Activated CD4-positive, alpha-beta T cell treated with anti-CD3 and anti-CD28 coated beads, Interleukin-2, amount 10 ng/mL, durations not matched to agents 24 days and 14 days (primary cell): ENCODE measurements at regions of chr2 and their contacts with region 1.

Region 1: DNA sequence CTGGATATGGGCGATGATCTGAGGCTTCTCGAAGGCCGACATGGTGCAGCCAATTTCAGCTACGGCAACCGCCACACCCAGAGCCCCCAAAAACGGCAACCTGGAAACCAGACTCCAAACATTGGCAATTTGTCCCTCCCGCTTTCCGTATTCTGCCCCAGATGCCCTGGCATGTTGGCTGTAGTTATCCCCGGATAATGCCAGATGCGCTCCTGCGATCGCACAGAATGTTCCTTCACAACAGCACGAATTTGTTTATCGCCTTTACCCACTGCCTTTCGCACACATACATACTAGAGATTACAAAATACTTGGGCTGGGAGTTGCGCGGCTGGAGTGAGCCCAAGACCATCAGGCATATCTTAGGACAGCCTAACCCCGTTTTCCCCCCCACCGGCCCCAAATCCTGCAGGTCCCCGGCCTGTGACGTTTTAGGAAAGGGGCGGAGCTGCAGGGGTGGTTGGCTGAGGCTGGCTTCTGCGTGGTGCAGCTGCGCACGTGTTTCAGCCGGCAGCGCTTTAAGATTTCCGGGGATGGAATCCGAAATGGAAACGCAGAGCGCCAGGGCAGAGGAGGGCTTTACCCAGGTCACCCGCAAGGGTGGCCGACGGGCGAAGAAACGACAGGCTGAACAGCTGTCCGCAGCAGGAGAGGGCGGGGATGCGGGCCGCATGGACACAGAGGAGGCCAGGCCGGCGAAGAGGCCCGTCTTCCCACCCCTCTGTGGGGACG is at the start of gene PNO1:
- DNase-seq: peak; percentile 99
- H3K4me3 Mint-ChIP-seq: peak within 1 kb of the TSS; percentile 98
- H3K27ac Mint-ChIP-seq: peak within 1 kb of the TSS; percentile 99
- H3K4me1 Mint-ChIP-seq: peaks cover 26% of the 10 kb centered on the region
- H3K27me3 Mint-ChIP-seq: no peaks in the 10 kb centered on the region
- total RNA-seq, gene PNO1: 35.4 and 38.4 TPM in 2 replicates

Region 2: GRCh38 chr2:68062680-68063387 is 94.7 kb before region 1 on chr2 and contains the start of gene C1D:
- intact Hi-C with region 1: loop called (anchors 1 kb)
- DNase-seq: peak; percentile 98
- H3K4me3 Mint-ChIP-seq: peak within 1 kb of the TSS; percentile 93
- H3K27ac Mint-ChIP-seq: peak within 1 kb of the TSS; percentile 95
- H3K4me1 Mint-ChIP-seq: peaks cover 14% of the 10 kb centered on the region
- H3K27me3 Mint-ChIP-seq: peaks cover 22% of the 10 kb centered on the region
- total RNA-seq, gene C1D: 28.9 and 33.7 TPM in 2 replicates

Region 3: DNA sequence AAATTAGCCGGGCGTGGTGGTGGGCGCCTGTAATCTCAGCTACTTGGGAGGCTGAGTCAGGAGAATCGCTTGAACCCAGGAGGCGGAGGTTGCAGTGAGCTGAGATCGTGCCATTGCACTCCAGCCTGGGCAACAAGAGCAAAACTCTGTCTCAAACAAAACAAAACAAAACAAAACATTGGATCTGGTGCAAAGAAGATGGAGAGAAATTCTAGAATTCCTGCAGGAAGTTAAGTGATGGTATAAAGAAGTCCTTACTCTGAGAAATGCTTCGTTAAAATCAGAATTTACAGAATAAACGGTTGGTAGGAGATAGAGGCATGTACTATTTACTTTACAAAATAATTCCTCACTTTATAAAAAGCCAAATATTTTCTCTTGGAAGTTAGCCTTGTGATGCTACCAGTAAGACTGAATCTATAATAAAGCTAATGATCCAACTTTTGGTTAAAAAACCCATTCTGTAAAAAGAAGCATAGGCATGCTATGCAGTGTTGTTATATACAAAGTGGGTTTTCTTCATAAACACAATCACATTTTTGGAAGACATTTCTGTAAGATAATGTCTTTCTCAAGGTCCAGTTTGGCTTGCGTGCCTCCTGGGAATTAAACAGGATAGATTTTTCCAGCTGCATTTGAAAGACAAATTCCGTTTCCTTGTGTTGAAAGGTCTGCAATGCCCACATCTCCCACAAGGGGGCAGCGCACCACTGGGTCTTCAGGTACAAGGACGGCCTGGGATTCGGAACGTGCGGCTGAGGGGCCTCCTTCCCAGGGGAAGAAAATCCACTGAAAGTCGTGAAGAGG is 35.5 kb before region 1 on chr2:
- intact Hi-C with region 1: loop called (anchors 2 kb)
- DNase-seq: peak; percentile 92
- H3K4me3 Mint-ChIP-seq: no peak overlapping the region
- H3K27ac Mint-ChIP-seq: no peak overlapping the region
- H3K4me1 Mint-ChIP-seq: peaks cover 4% of the 10 kb centered on the region
- H3K27me3 Mint-ChIP-seq: peaks cover 2% of the 10 kb centered on the region

Region 4: DNA sequence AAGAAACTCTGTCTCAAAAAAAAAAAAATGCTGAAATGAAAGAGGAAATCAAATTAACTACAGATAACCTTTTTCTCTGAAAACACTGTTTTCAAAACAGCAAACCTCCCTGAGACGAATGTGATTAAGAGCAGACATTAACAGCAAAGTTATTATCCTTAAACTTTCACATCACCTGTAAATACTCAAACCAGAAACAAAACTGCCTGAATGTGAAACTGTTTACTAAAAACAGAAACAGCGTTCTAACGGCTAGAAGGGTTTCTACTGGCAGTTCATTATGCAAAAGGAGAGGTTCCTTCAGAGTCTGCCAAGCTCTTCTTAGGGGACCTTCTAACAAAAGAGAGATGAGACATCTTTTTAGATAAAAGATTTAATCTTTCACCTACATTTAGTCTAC is 46.0 kb after region 1 on chr2:
- intact Hi-C with region 1: loop called (anchors 1 kb)
- DNase-seq: peak; percentile 68
- H3K4me3 Mint-ChIP-seq: peak overlapping the region; percentile 64
- H3K27ac Mint-ChIP-seq: peak overlapping the region; percentile 86
- H3K4me1 Mint-ChIP-seq: peaks cover 50% of the 10 kb centered on the region
- H3K27me3 Mint-ChIP-seq: no peaks in the 10 kb centered on the region